ENCODE measurements at regions of chr12 and their contacts with region 1.

Region 1: GRCh38 chr12:93677195-93678064 is at the start of gene CRADD:
- DNase-seq: peak; percentile 98
- ATAC-seq: peak; percentile 93
- H3K4me3 ChIP-seq: peak within 1 kb of the TSS; percentile 70 to 87 (median 71)
- H3K27ac ChIP-seq: peak within 1 kb of the TSS; percentile 98
- H3K4me1 ChIP-seq: peaks cover 35% of the 10 kb centered on the region
- H3K27me3 ChIP-seq: no peaks in the 10 kb centered on the region; a peak in 1 of 5 replicates
- CTCF ChIP-seq: peak; percentile 3; the same call in 1 of the 2 replicates
- EP300 ChIP-seq: 0 out of 4 replicates have a peak, but pooled peaks of 1 of the 2 experiments have one; percentile 52
- POLR2A ChIP-seq: peak; percentile 67 to 90; a peak in 3 of 4 replicates
- RAD21 ChIP-seq: no peak; the same call in 1 of the 2 replicates
- total RNA-seq, gene CRADD: 18.8 and 22.3 TPM in 2 replicates

Region 2: GRCh38 chr12:93727195-93727811 is 49.9 kb after region 1 on chr12:
- CTCF ChIA-PET with region 1: no interaction called
- POLR2A ChIA-PET with region 1: interaction called, 3 read pairs
- in situ Hi-C with region 1: no loop called
- intact Hi-C with region 1: loop called (anchors 1 kb)
- DNase-seq: no peak
- ATAC-seq: peak; percentile 94
- H3K4me3 ChIP-seq: peak overlapping the region in 1 of 3 experiments; percentile 20; a peak in 1 of 6 replicates
- H3K27ac ChIP-seq: peak overlapping the region; percentile 76
- H3K4me1 ChIP-seq: peaks cover 48% of the 10 kb centered on the region
- H3K27me3 ChIP-seq: no peaks in the 10 kb centered on the region
- CTCF ChIP-seq: 0 out of 2 replicates have a peak, but pooled peaks have one; percentile 12
- EP300 ChIP-seq: no peak
- POLR2A ChIP-seq: no peak
- RAD21 ChIP-seq: no peak

Region 3: DNA sequence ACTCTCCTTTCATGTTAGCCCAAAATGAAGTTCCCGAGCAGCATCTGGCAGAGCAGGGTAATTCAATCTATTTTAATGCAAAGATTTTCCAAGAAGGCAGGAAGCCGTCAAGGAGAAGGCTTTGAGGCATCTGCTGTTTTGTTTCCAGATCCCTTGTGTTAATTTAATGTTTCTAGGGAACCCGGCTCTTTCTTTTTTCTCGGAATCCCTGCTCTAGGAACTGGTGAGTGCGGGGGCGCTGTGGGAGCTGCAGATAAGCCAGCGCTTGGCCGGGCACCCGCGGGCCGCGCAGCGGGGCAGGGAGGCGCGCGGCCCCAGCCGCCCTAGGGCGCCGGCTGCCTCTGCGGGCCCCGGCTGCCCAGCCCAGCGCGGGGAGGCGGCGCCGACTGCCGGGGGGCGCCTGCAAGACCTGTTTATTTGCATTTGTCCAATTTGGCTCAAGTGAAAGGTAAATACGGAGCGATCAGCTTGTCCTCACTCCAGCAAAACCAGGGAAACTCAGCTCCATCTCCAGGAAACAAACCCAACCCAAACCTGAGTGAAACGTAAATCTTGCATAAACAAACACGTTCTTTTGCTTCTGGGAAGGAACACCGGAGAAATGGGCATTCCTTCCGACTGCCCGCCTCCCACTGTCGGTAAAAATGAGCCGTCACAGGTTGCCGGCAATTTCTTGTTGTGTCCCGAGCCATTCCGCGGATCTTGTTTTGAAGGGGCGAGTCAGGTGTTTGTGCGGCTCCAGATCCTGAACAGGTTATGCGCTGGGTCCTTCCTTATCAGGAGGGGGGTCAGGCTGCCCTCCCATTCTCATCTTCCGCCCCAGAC is 64.9 kb after region 1 on chr12:
- CTCF ChIA-PET with region 1: no interaction called
- POLR2A ChIA-PET with region 1: interaction called, 3 read pairs
- in situ Hi-C with region 1: loop called (anchors 5 kb)
- intact Hi-C with region 1: loop called (anchors 1 kb)
- DNase-seq: peak; percentile 55
- ATAC-seq: peak; percentile 100
- H3K4me3 ChIP-seq: peak overlapping the region; percentile 59 to 84 (median 77)
- H3K27ac ChIP-seq: peak overlapping the region; percentile 63
- H3K4me1 ChIP-seq: peaks cover 30% of the 10 kb centered on the region
- H3K27me3 ChIP-seq: no peaks in the 10 kb centered on the region
- CTCF ChIP-seq: peak; percentile 60
- EP300 ChIP-seq: peak; percentile 28 to 29; a peak in 1 of 4 replicates
- POLR2A ChIP-seq: no peak
- RAD21 ChIP-seq: peak; percentile 91

Region 4: DNA sequence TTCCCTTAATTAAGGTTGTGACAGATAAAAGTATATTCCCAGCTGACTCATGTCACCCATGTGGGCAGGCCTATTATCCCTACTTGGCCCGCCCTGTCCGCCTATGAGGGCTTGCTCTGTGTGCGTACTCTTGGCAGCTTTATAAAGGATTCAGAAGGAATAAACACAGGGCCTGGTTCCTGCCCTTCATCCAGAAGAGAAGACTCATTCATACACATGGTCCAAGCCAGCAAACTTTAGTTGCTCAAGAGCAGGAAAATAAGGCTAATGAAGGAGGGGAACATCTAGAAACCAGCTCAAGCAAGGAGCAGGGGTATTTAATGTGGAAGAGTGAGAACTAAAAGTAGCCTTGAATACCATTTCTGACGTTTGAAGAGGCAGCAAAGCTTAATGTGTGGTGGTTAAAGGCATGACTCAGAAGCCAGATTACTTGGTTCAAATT is 141.6 kb after region 1 on chr12:
- CTCF ChIA-PET with region 1: no interaction called
- POLR2A ChIA-PET with region 1: no interaction called
- in situ Hi-C with region 1: no loop called
- intact Hi-C with region 1: no loop called
- DNase-seq: no peak
- ATAC-seq: no peak
- H3K4me3 ChIP-seq: no peak overlapping the region
- H3K27ac ChIP-seq: no peak overlapping the region
- H3K4me1 ChIP-seq: peaks cover 9% of the 10 kb centered on the region
- H3K27me3 ChIP-seq: no peaks in the 10 kb centered on the region
- CTCF ChIP-seq: no peak
- EP300 ChIP-seq: no peak
- POLR2A ChIP-seq: no peak
- RAD21 ChIP-seq: no peak

Measured in HepG2 (cell line).